ENCODE measurements at regions of chr18 and their contacts with region 1.

Region 1: DNA sequence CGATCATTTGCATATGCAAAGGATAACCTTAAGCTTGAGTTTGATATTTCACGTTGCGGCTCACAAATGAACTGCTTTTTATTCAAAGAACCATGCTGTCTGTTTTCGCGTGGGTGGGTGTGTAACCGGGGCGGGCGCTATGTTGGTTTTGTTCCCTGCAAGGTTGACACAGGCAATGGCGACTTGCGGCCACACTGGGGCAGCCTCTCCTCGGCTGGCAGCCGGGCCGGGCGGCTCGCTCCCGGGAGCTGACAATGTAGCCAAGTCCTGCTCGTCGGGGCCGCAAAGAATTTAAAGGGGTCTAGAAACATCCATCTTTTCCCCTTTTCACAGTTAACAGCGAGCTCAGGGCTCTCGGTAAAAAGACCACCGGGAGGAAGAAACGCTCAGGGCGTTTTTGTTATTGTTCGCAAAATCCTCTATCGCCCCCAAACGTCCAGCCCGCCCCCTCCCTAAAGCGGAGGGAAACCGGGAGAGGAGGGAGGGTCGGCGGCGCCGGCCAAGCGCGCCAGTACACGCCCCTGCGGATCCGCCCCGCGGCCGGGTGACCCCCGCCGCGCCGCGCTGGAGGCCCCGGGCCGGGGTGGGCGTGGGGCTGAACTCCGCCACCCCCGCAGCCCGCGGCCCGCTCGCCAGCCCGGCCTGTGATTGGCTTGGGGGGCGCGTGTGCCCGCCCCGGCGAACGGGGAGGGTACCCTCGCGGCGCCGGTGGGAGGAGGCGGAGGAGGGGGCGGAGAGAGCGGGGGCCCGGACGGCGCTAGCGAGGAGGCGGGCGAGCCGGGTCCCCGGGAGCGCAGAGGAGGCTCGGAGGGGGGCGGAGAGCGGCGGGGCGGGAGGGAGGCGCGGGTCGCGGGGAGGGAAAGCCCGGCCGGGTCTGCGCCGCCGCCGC is at the start of gene NEDD4L:
- DNase-seq: peak; percentile 92
- H3K4me3 ChIP-seq: peak within 1 kb of the TSS; percentile 90 to 92
- H3K27ac ChIP-seq: peak within 1 kb of the TSS; percentile 84 to 86
- H3K4me1 ChIP-seq: peaks cover 0 to 10% of the 10 kb centered on the region in 2 experiments; a peak in 2 of 4 replicates
- H3K27me3 ChIP-seq: no peaks in the 10 kb centered on the region
- CTCF ChIP-seq: peak; percentile 77
- EP300 ChIP-seq: no peak
- RAD21 ChIP-seq: peak; percentile 86
- polyA plus RNA-seq, gene NEDD4L: 11.0 and 13.2 TPM in 2 replicates

Region 2: GRCh38 chr18:57881818-57882413 is 161.8 kb before region 1 on chr18:
- CTCF ChIA-PET with region 1: interaction called, 14 read pairs
- POLR2A ChIA-PET with region 1: no interaction called
- DNase-seq: peak; percentile 57
- H3K4me3 ChIP-seq: peak overlapping the region in 1 of 2 experiments; percentile 33; a peak in 1 of 4 replicates
- H3K27ac ChIP-seq: no peak overlapping the region
- H3K4me1 ChIP-seq: no peaks in the 10 kb centered on the region; a peak in 1 of 4 replicates
- H3K27me3 ChIP-seq: no peaks in the 10 kb centered on the region
- CTCF ChIP-seq: peak; percentile 94
- EP300 ChIP-seq: no peak
- RAD21 ChIP-seq: peak; percentile 98

Region 3: GRCh38 chr18:57931038-57931437 is 112.7 kb before region 1 on chr18:
- CTCF ChIA-PET with region 1: no interaction called
- POLR2A ChIA-PET with region 1: no interaction called
- DNase-seq: no peak
- H3K4me3 ChIP-seq: no peak overlapping the region
- H3K27ac ChIP-seq: no peak overlapping the region
- H3K4me1 ChIP-seq: no peaks in the 10 kb centered on the region
- H3K27me3 ChIP-seq: no peaks in the 10 kb centered on the region
- CTCF ChIP-seq: no peak
- EP300 ChIP-seq: no peak
- RAD21 ChIP-seq: no peak

Region 4: DNA sequence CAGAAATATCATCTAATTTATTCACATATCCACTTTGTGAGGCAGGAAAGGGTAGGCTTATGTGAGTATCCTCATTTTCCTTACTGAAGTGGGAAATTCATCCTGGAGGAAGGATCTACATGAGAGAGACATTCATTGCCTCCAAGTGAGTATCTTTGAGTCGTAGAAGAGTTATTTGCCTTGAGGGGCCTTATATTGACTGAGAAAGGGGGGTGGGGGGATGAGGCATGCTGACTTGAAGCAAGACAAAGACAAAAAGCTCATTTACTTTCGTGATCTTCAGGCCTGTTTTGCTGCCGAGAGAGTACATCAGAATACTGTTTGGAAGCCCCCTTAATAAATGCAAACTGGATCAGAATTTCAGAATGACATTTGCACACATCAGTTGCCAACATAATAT is 17.3 kb before region 1 on chr18:
- CTCF ChIA-PET with region 1: interaction called, 11 read pairs
- POLR2A ChIA-PET with region 1: no interaction called
- DNase-seq: no peak
- H3K4me3 ChIP-seq: no peak overlapping the region
- H3K27ac ChIP-seq: no peak overlapping the region
- H3K4me1 ChIP-seq: no peaks in the 10 kb centered on the region
- H3K27me3 ChIP-seq: no peaks in the 10 kb centered on the region
- CTCF ChIP-seq: no peak
- EP300 ChIP-seq: no peak
- RAD21 ChIP-seq: no peak

Region 5: DNA sequence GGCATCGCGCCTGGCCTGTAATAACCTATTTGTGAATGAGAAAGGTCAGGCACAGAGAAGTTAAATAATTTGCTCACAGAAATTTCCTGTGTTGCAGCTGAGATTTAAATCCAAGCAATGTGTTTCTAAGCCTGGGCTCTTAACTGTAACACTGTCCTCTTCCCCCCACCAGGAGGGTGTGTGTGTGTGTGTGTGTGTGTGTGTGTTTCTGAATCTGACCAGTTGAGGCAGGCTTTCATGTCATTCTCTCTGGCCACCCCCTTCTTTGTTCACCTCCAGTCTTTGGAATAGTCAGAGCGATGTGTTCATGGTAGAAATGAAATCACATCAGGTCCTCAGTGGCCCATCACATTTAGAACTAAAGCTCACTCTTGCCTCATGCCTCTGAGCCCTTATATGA is 81.4 kb after region 1 on chr18:
- CTCF ChIA-PET with region 1: interaction called, 99 read pairs
- POLR2A ChIA-PET with region 1: no interaction called
- DNase-seq: no peak
- H3K4me3 ChIP-seq: no peak overlapping the region
- H3K27ac ChIP-seq: no peak overlapping the region
- H3K4me1 ChIP-seq: no peaks in the 10 kb centered on the region
- H3K27me3 ChIP-seq: no peaks in the 10 kb centered on the region
- CTCF ChIP-seq: no peak
- EP300 ChIP-seq: no peak
- RAD21 ChIP-seq: no peak

Region 6: GRCh38 chr18:58143386-58143785 is 99.7 kb after region 1 on chr18:
- CTCF ChIA-PET with region 1: interaction called, 12 read pairs
- POLR2A ChIA-PET with region 1: no interaction called
- DNase-seq: peak; percentile 71
- H3K4me3 ChIP-seq: no peak overlapping the region
- H3K27ac ChIP-seq: no peak overlapping the region; a peak in 1 of 4 replicates
- H3K4me1 ChIP-seq: peaks cover 0 to 11% of the 10 kb centered on the region in 2 experiments; a peak in 2 of 4 replicates
- H3K27me3 ChIP-seq: no peaks in the 10 kb centered on the region
- CTCF ChIP-seq: no peak
- EP300 ChIP-seq: peak in 1 of 2 experiments; percentile 37; a peak in 1 of 4 replicates
- RAD21 ChIP-seq: no peak

Region 7: DNA sequence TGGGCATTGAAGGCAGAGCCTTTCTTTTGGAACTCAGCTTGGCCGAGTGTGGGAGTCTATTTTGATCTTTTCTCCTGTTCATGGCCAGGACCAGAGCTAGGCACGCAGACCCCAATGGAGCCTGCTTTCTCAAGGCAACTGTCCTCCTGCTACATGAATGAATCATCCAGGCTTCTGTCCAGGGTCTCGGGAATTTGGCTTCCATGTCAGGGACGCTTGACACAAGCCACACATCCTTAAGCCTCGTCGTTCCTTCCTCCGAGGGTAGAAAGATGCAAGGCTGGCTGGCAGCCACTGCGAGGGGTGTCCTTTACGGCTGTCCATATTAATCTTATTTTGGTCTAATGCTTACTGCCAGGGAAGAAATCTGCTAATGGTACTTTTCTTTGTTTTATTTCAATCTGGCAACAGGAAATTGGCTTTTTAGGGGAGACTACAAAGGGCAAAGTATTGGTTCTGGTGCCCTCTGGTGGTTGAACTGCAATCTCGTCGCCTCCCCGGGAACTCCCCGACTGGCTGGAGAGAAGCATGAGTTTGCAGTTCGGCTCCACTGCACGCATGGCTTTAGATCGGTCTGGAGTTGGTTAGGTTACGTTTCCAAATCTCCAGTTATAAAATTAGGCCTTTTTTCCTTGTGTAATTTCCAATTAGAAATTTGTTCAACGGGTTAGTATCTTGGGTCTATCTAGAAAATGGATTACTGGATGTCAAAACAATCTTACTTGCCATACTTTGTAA is 449.9 kb after region 1 on chr18:
- CTCF ChIA-PET with region 1: interaction called, 10 read pairs
- POLR2A ChIA-PET with region 1: no interaction called
- DNase-seq: peak; percentile 74
- H3K4me3 ChIP-seq: peak overlapping the region in 1 of 2 experiments; percentile 13; a peak in 1 of 4 replicates
- H3K27ac ChIP-seq: no peak overlapping the region
- H3K4me1 ChIP-seq: peaks cover 0 to 4% of the 10 kb centered on the region in 2 experiments; a peak in 1 of 4 replicates
- H3K27me3 ChIP-seq: no peaks in the 10 kb centered on the region
- CTCF ChIP-seq: peak; percentile 94
- EP300 ChIP-seq: no peak
- RAD21 ChIP-seq: peak; percentile 88